Activated naive CD4-positive, alpha-beta T cell treated with anti-CD3 and anti-CD28 coated beads for 36 hours (primary cell): ENCODE measurements at regions of chr7 and their contacts with region 1.

Region 1: GRCh38 chr7:75738987-75739795 is 450 bp upstream of the HIP1 start:
- DNase-seq: peak; percentile 99
- H3K4me3 Mint-ChIP-seq: peak overlapping the region; percentile 92
- H3K27ac Mint-ChIP-seq: peak overlapping the region; percentile 81
- H3K4me1 Mint-ChIP-seq: peaks cover 14% of the 10 kb centered on the region
- H3K27me3 Mint-ChIP-seq: peaks cover 10% of the 10 kb centered on the region

Region 2: DNA sequence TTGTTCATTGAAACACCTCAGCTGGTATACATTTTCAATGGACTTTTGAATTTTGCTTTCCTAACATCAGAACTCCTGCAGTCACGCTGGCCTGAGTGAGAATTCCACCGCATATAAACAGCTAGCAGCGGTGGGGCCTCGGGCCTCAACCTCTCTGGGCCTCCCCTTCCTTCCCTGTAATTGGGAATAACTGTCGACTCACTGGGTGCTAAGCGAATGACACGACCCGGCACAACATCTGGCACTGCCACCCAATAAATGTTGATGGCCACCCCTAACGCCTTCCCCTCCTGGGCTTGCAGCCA is 666.3 kb before region 1 on chr7:
- CTCF ChIA-PET with region 1: no interaction called
- intact Hi-C with region 1: loop called (anchors 10 kb)
- DNase-seq: peak; percentile 31
- H3K4me3 Mint-ChIP-seq: peak overlapping the region; percentile 95
- H3K27ac Mint-ChIP-seq: peak overlapping the region; percentile 95
- H3K4me1 Mint-ChIP-seq: peaks cover 13% of the 10 kb centered on the region
- H3K27me3 Mint-ChIP-seq: no peaks in the 10 kb centered on the region

Region 3: DNA sequence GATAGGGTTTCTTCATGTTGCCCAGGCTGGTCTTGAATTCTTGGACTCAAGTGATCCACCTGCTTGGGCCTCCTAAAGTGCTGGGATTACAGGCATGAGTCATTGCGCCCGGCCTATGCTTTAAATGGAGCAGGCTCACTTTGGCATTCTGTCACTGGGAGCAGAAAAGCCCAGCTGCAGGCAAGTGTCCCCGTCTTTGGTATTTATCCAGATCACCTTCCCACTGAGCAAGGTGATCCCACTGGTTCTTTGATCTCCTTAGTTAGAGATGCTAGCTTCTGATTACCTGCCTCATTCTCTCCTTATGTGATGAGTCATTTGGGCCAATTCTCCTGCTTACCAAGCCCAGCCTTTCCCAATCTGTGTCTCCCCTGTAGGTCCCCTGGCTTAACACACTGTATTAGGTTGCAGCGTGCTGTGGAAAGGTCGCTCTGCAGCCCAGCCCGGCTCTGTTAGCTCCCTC is 207.8 kb before region 1 on chr7:
- CTCF ChIA-PET with region 1: no interaction called
- intact Hi-C with region 1: loop called (anchors 5 kb)
- DNase-seq: no peak
- H3K4me3 Mint-ChIP-seq: no peak overlapping the region
- H3K27ac Mint-ChIP-seq: no peak overlapping the region
- H3K4me1 Mint-ChIP-seq: peaks cover 8% of the 10 kb centered on the region
- H3K27me3 Mint-ChIP-seq: no peaks in the 10 kb centered on the region

Region 4: GRCh38 chr7:75565132-75565837 is 173.9 kb before region 1 on chr7:
- CTCF ChIA-PET with region 1: no interaction called
- intact Hi-C with region 1: no loop called
- DNase-seq: no peak
- H3K4me3 Mint-ChIP-seq: no peak overlapping the region
- H3K27ac Mint-ChIP-seq: no peak overlapping the region
- H3K4me1 Mint-ChIP-seq: no peaks in the 10 kb centered on the region
- H3K27me3 Mint-ChIP-seq: no peaks in the 10 kb centered on the region

Region 5: GRCh38 chr7:75776295-75776971 is 37.2 kb after region 1 on chr7:
- CTCF ChIA-PET with region 1: no interaction called
- intact Hi-C with region 1: loop called (anchors 2 kb)
- DNase-seq: peak; percentile 81
- H3K4me3 Mint-ChIP-seq: no peak overlapping the region
- H3K27ac Mint-ChIP-seq: peak overlapping the region; percentile 81
- H3K4me1 Mint-ChIP-seq: peaks cover 32% of the 10 kb centered on the region
- H3K27me3 Mint-ChIP-seq: peaks cover 7% of the 10 kb centered on the region

Region 6: DNA sequence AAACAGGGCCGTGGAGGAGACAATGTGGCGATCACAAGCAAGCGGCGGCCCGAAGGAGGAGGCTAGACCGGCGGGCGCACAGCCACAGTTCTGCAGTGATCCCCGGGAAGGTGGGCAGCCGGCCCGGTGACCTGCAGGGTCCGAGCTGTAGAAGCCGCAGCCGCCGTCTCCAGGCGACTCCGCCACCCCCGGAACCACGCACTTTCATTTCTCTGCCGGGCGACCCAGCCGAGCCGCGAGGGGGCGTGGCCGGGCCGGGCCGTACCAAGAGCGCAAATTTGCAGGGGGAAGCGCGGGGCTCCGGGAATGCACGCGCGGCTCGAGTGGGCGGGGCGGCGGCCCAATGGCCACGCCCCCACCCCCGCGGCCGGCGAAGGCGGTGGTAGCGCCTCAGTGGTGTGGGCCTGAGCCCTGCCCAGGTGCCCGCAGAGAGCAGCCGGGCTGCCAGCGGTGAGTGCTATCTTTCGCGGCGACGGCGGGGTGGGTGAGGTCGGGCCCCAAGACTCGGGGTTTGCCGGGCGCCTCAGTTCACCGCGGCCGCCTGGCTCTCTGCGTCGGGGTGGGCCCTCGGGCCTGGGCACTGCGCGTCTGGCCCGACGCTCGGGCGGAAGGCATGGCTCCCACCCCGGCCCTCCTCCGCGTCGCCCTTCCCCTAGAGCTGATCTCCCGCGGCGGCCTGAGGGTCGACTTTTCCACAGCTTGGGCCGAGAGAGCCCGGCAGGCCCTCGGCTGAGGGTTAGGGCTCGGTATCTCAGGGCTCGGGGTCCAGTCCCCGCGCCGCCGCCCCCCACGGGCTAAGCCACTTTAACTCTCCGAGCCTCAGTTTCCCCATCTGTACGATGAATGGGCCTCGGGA is 175.8 kb after region 1 on chr7 and contains the start of gene POR:
- CTCF ChIA-PET with region 1: no interaction called
- intact Hi-C with region 1: loop called (anchors 5 kb)
- DNase-seq: peak; percentile 94
- H3K4me3 Mint-ChIP-seq: peak within 1 kb of the TSS; percentile 88
- H3K27ac Mint-ChIP-seq: peak within 1 kb of the TSS; percentile 85
- H3K4me1 Mint-ChIP-seq: peaks cover 30% of the 10 kb centered on the region
- H3K27me3 Mint-ChIP-seq: no peaks in the 10 kb centered on the region
- total RNA-seq, gene POR: 22.9 to 26.0 TPM

Region 7: GRCh38 chr7:75994388-75995051 is 255.3 kb after region 1 on chr7 and contains the start of gene TMEM120A:
- CTCF ChIA-PET with region 1: no interaction called
- intact Hi-C with region 1: loop called (anchors 2 kb)
- DNase-seq: peak; percentile 94
- H3K4me3 Mint-ChIP-seq: peak within 1 kb of the TSS; percentile 64
- H3K27ac Mint-ChIP-seq: no peak within 1 kb of the TSS
- H3K4me1 Mint-ChIP-seq: peaks cover 23% of the 10 kb centered on the region
- H3K27me3 Mint-ChIP-seq: no peaks in the 10 kb centered on the region
- total RNA-seq, gene TMEM120A: 17.0 to 22.4 TPM

Region 8: GRCh38 chr7:76047811-76048667 is 308.8 kb after region 1 on chr7 and contains the starts of genes MDH2 and STYXL1:
- CTCF ChIA-PET with region 1: no interaction called
- intact Hi-C with region 1: loop called (anchors 2 kb)
- DNase-seq: peak; percentile 95
- H3K4me3 Mint-ChIP-seq: peak within 1 kb of the TSS; percentile 98
- H3K27ac Mint-ChIP-seq: peak within 1 kb of the TSS; percentile 96
- H3K4me1 Mint-ChIP-seq: peaks cover 54% of the 10 kb centered on the region
- H3K27me3 Mint-ChIP-seq: no peaks in the 10 kb centered on the region
- total RNA-seq, gene MDH2: 325 TPM
- total RNA-seq, gene STYXL1: 27.6 to 28.1 TPM